ENCODE measurements at regions of chr20 and their contacts with region 1.

Region 1: DNA sequence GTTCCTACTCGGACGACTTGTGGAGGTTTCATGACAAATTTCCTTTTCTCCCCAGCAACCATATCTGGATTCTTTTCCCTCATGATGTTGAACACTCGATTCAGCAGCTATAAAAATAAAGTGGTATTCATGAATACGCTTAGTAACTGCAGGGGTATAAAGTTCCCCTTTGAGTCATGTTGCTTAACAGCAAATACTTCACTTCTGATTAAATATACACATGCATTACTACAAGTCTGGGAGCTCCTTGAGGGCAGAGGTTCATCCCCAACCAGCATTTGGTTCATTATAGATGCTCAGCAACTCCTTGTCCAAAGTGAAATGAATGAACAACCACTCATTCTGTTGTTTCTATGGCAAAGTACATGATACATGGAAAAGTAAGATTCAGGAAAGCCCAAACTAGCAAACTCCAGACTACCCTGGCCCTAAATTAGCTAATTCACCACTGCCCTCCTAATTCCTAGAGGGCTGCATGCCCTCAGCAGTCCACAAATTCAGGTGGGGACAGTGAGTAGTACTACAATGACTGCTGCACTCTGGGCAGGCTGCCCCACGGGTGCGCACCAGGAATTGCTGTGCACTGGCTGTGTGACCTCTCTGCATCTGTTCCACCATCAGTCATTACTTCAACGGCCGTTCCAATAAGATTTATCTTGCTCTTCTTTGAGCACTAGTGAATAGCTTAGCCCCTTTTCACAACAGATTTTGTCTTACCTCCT is 15.2 kb downstream of the EIF2S2 start:
- DNase-seq: no peak
- ATAC-seq: no peak; the same call in 2 of the 3 replicates
- H3K4me3 ChIP-seq: no peak overlapping the region
- H3K27ac ChIP-seq: no peak overlapping the region
- H3K4me1 ChIP-seq: no peaks in the 10 kb centered on the region
- H3K27me3 ChIP-seq: no peaks in the 10 kb centered on the region
- CTCF ChIP-seq: no peak
- EP300 ChIP-seq: no peak
- POLR2A ChIP-seq: 0 out of 2 replicates have a peak, but pooled peaks have one; percentile 35
- RAD21 ChIP-seq: no peak

Region 2: DNA sequence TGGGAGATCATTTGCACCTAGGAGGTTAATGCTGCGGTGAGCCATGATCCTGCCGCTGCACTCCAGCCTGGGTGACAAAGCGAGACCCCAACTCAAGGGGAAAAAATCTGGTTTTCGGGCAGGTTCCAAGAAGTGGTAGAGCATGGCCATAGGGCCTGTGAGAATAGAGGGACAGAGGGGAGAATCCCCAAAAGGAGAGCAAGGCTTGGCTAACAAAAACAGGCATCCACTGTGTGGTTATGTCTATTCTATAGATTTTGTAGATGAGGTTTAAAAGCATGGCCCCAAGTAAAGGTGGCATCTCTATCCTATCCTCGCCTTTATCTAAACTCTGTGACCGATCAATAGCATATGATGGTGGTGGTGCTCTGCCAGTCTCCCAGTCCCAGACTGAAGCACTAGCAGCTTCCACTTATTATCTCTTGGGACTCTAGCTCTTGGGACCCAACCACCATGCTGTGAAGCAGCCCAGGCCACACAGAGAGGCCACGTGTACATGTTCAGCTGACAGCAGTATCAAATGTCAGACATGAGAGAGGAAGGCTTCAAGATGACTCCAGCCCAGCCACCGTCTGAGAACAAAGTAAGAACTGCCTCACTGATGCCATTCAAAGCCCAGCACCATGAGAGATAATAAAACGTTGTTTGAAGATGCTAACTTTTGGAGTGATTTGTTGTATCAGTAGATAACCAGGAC is 12.5 kb before region 1 on chr20:
- CTCF ChIA-PET with region 1: no interaction called
- POLR2A ChIA-PET with region 1: interaction called, 23 read pairs
- in situ Hi-C with region 1: no loop called
- intact Hi-C with region 1: no loop called
- DNase-seq: peak in 1 of 4 experiments; percentile 53
- ATAC-seq: peak; percentile 28; the same call in 2 of the 3 replicates
- H3K4me3 ChIP-seq: no peak overlapping the region
- H3K27ac ChIP-seq: no peak overlapping the region
- H3K4me1 ChIP-seq: peaks cover 35 to 39% of the 10 kb centered on the region in 2 experiments
- H3K27me3 ChIP-seq: no peaks in the 10 kb centered on the region
- CTCF ChIP-seq: no peak
- EP300 ChIP-seq: no peak
- POLR2A ChIP-seq: no peak
- RAD21 ChIP-seq: no peak

Region 3: DNA sequence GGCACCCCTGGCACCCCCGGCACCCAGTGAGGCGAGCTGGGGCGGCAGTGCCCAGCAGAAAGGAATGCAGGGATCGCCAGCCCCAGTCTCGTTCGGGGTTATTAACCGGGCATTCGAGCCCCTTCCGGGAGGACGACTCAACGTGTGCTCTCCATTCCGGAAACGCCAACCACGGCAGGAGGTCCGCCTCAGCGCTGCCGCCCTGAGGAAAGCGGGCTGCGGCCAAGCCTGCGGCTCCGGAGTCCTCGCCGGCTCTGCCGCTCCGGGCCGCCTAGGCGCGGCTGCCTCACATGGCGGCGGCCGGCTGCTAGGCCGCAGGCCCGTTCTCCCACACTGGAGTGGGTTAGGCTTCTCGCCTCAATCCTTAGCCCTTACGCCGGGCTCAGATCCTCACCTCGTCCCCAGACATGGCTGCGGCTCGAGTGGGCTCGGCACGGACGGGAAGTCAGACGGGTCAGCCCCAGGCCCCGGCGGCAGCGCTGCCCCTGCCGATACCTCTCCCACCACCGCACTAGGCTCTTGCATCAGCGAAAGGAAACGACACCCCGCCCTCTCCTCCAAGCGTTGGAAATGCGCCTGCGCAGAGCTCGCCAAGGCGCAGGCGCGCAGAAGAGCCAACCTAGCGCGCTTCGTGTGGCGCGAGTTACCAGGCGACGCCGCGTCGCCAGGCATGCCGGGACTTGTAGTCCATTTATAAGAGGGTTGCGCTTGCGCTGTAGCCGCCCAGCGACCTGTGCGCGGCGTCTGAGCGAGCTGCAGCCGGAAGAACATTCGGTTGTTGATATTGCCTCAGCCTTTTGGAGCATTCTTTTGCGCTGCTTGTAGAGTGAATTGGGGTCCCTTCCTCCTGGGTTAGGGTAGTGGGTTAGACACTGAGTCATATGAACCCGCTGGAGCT is 15.1 kb after region 1 on chr20 and contains the start of gene EIF2S2:
- CTCF ChIA-PET with region 1: no interaction called
- POLR2A ChIA-PET with region 1: interaction called, 32 read pairs
- in situ Hi-C with region 1: no loop called
- intact Hi-C with region 1: no loop called
- DNase-seq: peak; percentile 92 to 100 (median 94)
- ATAC-seq: peak; percentile 91
- H3K4me3 ChIP-seq: peak within 1 kb of the TSS; percentile 99
- H3K27ac ChIP-seq: peak within 1 kb of the TSS; percentile 99
- H3K4me1 ChIP-seq: peaks cover 18 to 21% of the 10 kb centered on the region in 2 experiments; a peak in 4 of 5 replicates
- H3K27me3 ChIP-seq: no peaks in the 10 kb centered on the region
- CTCF ChIP-seq: no peak
- EP300 ChIP-seq: peak; percentile 16; the same call in 1 of the 2 replicates
- POLR2A ChIP-seq: peak; percentile 98
- RAD21 ChIP-seq: no peak
- polyA plus RNA-seq, gene EIF2S2: 79.7 to 92.3 TPM

Measured in K562 (cell line).